CD8-positive, alpha-beta memory T cell (primary cell): ENCODE measurements at regions of chr6 and their contacts with region 1.

Region 1: GRCh38 chr6:25042036-25042521 is 106.3 kb upstream of the RIPOR2 start:
- DNase-seq: peak; percentile 38 to 68 (median 52)
- H3K4me3 ChIP-seq: peak overlapping the region; percentile 85
- H3K4me3 Mint-ChIP-seq: peak overlapping the region; percentile 94 to 99 (median 96)
- H3K27ac ChIP-seq: peak overlapping the region; percentile 67
- H3K27ac Mint-ChIP-seq: peak overlapping the region; percentile 93 to 100 (median 98)
- H3K4me1 ChIP-seq: peaks cover 55% of the 10 kb centered on the region
- H3K4me1 Mint-ChIP-seq: peaks cover 57 to 66% (median 64%) of the 10 kb centered on the region in 3 donors
- H3K27me3 ChIP-seq: no peaks in the 10 kb centered on the region
- H3K27me3 Mint-ChIP-seq: no peaks in the 10 kb centered on the region

Region 2: GRCh38 chr6:24761193-24761835 is 280.8 kb before region 1 on chr6:
- CTCF ChIA-PET with region 1: no interaction called
- POLR2A ChIA-PET with region 1: no interaction called
- DNase-seq: no peak
- H3K4me3 ChIP-seq: no peak overlapping the region
- H3K4me3 Mint-ChIP-seq: no peak overlapping the region
- H3K27ac ChIP-seq: no peak overlapping the region
- H3K27ac Mint-ChIP-seq: no peak overlapping the region
- H3K4me1 ChIP-seq: no peaks in the 10 kb centered on the region
- H3K4me1 Mint-ChIP-seq: peaks cover 0 to 2% (median 0%) of the 10 kb centered on the region in 3 donors
- H3K27me3 ChIP-seq: no peaks in the 10 kb centered on the region
- H3K27me3 Mint-ChIP-seq: no peaks in the 10 kb centered on the region

Region 3: GRCh38 chr6:25061289-25061936 is 19.3 kb after region 1 on chr6:
- CTCF ChIA-PET with region 1: interaction called, 11 read pairs
- POLR2A ChIA-PET with region 1: interaction called, 7 read pairs
- DNase-seq: no peak
- H3K4me3 ChIP-seq: no peak overlapping the region
- H3K4me3 Mint-ChIP-seq: no peak overlapping the region
- H3K27ac ChIP-seq: no peak overlapping the region
- H3K27ac Mint-ChIP-seq: no peak overlapping the region
- H3K4me1 ChIP-seq: peaks cover 13% of the 10 kb centered on the region
- H3K4me1 Mint-ChIP-seq: peaks cover 11 to 23% (median 12%) of the 10 kb centered on the region in 3 donors
- H3K27me3 ChIP-seq: no peaks in the 10 kb centered on the region
- H3K27me3 Mint-ChIP-seq: no peaks in the 10 kb centered on the region